Mammary epithelial cell (primary cell): ENCODE measurements at regions of chr1 and their contacts with region 1.

Region 1: DNA sequence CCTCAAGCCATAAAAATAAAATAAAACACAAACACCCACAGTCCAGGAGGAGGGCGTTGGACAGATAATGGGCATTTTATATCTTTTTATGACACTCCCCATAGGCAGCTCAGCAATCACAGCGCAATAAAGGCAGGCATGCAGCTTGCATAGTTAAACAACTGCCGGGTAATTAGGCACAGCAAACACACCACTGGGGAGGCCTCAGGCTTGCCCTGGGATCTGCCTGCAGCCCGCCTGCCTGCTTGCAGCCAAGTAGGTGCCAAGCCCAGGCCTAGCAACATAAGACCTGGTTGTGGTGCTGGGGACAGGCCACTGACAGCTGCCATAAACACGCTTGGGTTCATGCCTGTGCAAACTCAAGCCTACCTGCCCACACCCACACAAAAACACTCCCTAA is 54.2 kb downstream of the DMAP1 start:
- DNase-seq: no peak
- H3K4me3 ChIP-seq: no peak overlapping the region
- H3K27ac ChIP-seq: no peak overlapping the region
- H3K4me1 ChIP-seq: no peaks in the 10 kb centered on the region
- H3K27me3 ChIP-seq: no peaks in the 10 kb centered on the region
- CTCF ChIP-seq: no peak

Region 2: GRCh38 chr1:44368471-44369151 is 101.2 kb after region 1 on chr1:
- CTCF ChIA-PET with region 1: no interaction called
- dilution Hi-C with region 1: loop called (anchors 5 kb)
- in situ Hi-C with region 1: no loop called
- intact Hi-C with region 1: no loop called
- DNase-seq: no peak
- H3K4me3 ChIP-seq: no peak overlapping the region
- H3K27ac ChIP-seq: no peak overlapping the region
- H3K4me1 ChIP-seq: no peaks in the 10 kb centered on the region
- H3K27me3 ChIP-seq: peaks cover 3% of the 10 kb centered on the region
- CTCF ChIP-seq: no peak

Region 3: DNA sequence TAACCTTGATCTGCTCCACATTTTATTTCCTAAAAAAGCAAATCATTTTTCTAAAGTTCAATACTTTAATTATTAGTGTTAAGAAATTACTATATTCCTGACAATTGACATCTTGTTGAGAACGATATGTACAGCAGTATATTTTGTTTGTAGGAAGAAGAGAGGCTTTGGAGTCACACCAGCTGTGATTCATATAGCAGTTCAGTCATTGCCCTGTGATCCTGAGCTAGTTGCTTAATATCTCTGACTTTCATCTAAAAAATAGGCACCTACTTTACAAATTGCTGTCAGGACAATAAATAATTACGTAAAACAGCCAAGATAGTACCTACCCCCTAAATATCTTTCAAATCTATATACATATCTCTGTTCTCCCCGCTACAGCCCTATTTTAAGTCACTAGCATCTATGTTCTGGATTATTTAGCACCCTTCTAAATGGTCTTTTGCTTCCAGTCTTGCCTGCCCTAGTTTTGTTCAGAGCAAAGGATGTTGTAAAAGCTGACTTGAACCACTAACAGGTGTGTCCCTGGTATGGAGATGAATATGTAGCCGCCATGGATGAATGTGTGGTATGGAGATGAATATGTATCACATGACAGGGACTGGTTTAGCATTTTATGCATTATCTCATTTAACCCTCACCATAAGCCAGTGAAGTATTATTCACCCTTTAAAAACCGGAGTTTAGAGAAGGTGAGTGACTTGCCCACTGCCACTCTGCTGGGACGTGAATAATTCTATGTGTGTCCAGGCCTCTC is 179.8 kb after region 1 on chr1:
- CTCF ChIA-PET with region 1: no interaction called
- dilution Hi-C with region 1: no loop called
- in situ Hi-C with region 1: no loop called
- intact Hi-C with region 1: no loop called
- DNase-seq: peak; percentile 7
- H3K4me3 ChIP-seq: no peak overlapping the region
- H3K27ac ChIP-seq: no peak overlapping the region
- H3K4me1 ChIP-seq: no peaks in the 10 kb centered on the region
- H3K27me3 ChIP-seq: no peaks in the 10 kb centered on the region
- CTCF ChIP-seq: no peak